ENCODE measurements at regions of chr15 and their contacts with region 1.

Region 1: GRCh38 chr15:41936649-41937567 is 35.4 kb downstream of the EHD4 start:
- DNase-seq: peak; percentile 61 to 95 (median 74)
- ATAC-seq: peak; percentile 81
- H3K4me3 ChIP-seq: peak overlapping the region; percentile 11
- H3K4me3 Mint-ChIP-seq: peak overlapping the region; percentile 83
- H3K27ac ChIP-seq: peak overlapping the region; percentile 97
- H3K27ac Mint-ChIP-seq: peak overlapping the region; percentile 89
- H3K4me1 ChIP-seq: peaks cover 68% of the 10 kb centered on the region
- H3K4me1 Mint-ChIP-seq: peaks cover 63% of the 10 kb centered on the region
- H3K27me3 ChIP-seq: no peaks in the 10 kb centered on the region
- H3K27me3 Mint-ChIP-seq: no peaks in the 10 kb centered on the region
- CTCF ChIP-seq: peak; percentile 42

Region 2: GRCh38 chr15:41660235-41661077 is 276.5 kb before region 1 on chr15 and contains the start of gene MGA:
- CTCF ChIA-PET with region 1: no interaction called
- POLR2A ChIA-PET with region 1: interaction called, 13 read pairs
- intact Hi-C with region 1: no loop called
- DNase-seq: peak; percentile 77 to 96 (median 89)
- ATAC-seq: peak; percentile 79
- H3K4me3 ChIP-seq: peak within 1 kb of the TSS; percentile 65
- H3K4me3 Mint-ChIP-seq: peak within 1 kb of the TSS; percentile 83
- H3K27ac ChIP-seq: peak within 1 kb of the TSS; percentile 81 to 91
- H3K27ac Mint-ChIP-seq: peak within 1 kb of the TSS; percentile 89
- H3K4me1 ChIP-seq: peaks cover 32% of the 10 kb centered on the region
- H3K4me1 Mint-ChIP-seq: peaks cover 66% of the 10 kb centered on the region
- H3K27me3 ChIP-seq: no peaks in the 10 kb centered on the region
- H3K27me3 Mint-ChIP-seq: no peaks in the 10 kb centered on the region
- CTCF ChIP-seq: no peak
- total RNA-seq, gene MGA: 31.0 to 33.9 TPM

Region 3: GRCh38 chr15:41827880-41828806 is 108.8 kb before region 1 on chr15 and contains the start of gene JMJD7:
- CTCF ChIA-PET with region 1: no interaction called
- POLR2A ChIA-PET with region 1: interaction called, 5 read pairs
- intact Hi-C with region 1: loop called in 1 of 2 experiments (anchors 2 kb)
- DNase-seq: peak; percentile 92 to 99 (median 96)
- ATAC-seq: peak; percentile 94
- H3K4me3 ChIP-seq: peak within 1 kb of the TSS; percentile 92
- H3K4me3 Mint-ChIP-seq: peak within 1 kb of the TSS; percentile 90
- H3K27ac ChIP-seq: peak within 1 kb of the TSS; percentile 53 to 64
- H3K27ac Mint-ChIP-seq: peak within 1 kb of the TSS; percentile 87
- H3K4me1 ChIP-seq: peaks cover 52% of the 10 kb centered on the region
- H3K4me1 Mint-ChIP-seq: peaks cover 30% of the 10 kb centered on the region
- H3K27me3 ChIP-seq: no peaks in the 10 kb centered on the region
- H3K27me3 Mint-ChIP-seq: no peaks in the 10 kb centered on the region
- CTCF ChIP-seq: no peak
- total RNA-seq, gene JMJD7: 35.6 to 38.4 TPM

Region 4: GRCh38 chr15:41904541-41905005 is 32.3 kb before region 1 on chr15:
- CTCF ChIA-PET with region 1: interaction called, 36 read pairs
- POLR2A ChIA-PET with region 1: interaction called, 17 read pairs
- intact Hi-C with region 1: loop called in 1 of 2 experiments (anchors 2 kb)
- DNase-seq: peak; percentile 63 to 85 (median 71)
- ATAC-seq: peak; percentile 88
- H3K4me3 ChIP-seq: no peak overlapping the region
- H3K4me3 Mint-ChIP-seq: no peak overlapping the region
- H3K27ac ChIP-seq: no peak overlapping the region
- H3K27ac Mint-ChIP-seq: peak overlapping the region; percentile 80
- H3K4me1 ChIP-seq: peaks cover 10% of the 10 kb centered on the region
- H3K4me1 Mint-ChIP-seq: peaks cover 7% of the 10 kb centered on the region
- H3K27me3 ChIP-seq: no peaks in the 10 kb centered on the region
- H3K27me3 Mint-ChIP-seq: no peaks in the 10 kb centered on the region
- CTCF ChIP-seq: peak; percentile 95

Region 5: DNA sequence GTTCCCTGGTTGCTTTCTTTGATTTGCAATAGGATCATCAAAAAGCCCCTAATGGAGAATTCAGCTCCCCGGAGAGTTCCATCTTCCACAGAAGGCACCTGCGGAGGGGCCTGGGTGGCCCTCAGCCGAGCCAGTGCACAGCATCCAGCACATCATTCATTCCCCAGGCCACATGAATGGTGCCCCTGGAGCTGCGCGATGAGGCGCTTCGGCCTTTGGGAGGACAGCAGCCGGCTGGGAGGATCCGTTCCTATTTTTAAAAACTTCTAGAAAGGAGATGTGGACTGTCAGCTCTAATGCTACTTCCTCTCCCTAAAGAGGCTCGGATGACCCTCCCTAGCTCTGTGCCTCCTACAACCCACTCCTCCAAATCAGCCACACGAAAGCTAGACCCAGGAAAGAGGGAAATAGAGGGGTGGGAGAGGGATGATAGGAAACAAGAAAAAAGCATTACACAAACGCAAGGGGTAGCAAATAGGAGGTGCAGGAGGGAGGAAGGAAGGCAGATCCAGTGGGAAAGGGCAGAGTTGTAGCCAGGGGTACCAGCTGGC is 15.2 kb after region 1 on chr15:
- CTCF ChIA-PET with region 1: no interaction called
- POLR2A ChIA-PET with region 1: interaction called, 13 read pairs
- intact Hi-C with region 1: no loop called
- DNase-seq: no peak
- ATAC-seq: no peak
- H3K4me3 ChIP-seq: no peak overlapping the region
- H3K4me3 Mint-ChIP-seq: no peak overlapping the region
- H3K27ac ChIP-seq: no peak overlapping the region
- H3K27ac Mint-ChIP-seq: no peak overlapping the region
- H3K4me1 ChIP-seq: peaks cover 2% of the 10 kb centered on the region
- H3K4me1 Mint-ChIP-seq: no peaks in the 10 kb centered on the region
- H3K27me3 ChIP-seq: no peaks in the 10 kb centered on the region
- H3K27me3 Mint-ChIP-seq: no peaks in the 10 kb centered on the region
- CTCF ChIP-seq: no peak

Region 6: GRCh38 chr15:42056934-42057779 is 120.2 kb after region 1 on chr15:
- CTCF ChIA-PET with region 1: no interaction called
- POLR2A ChIA-PET with region 1: no interaction called
- intact Hi-C with region 1: no loop called
- DNase-seq: peak in 13 of 14 experiments; percentile 15 to 82 (median 35)
- ATAC-seq: peak; percentile 81
- H3K4me3 ChIP-seq: peak overlapping the region; percentile 36
- H3K4me3 Mint-ChIP-seq: peak overlapping the region; percentile 61
- H3K27ac ChIP-seq: no peak overlapping the region
- H3K27ac Mint-ChIP-seq: peak overlapping the region; percentile 31
- H3K4me1 ChIP-seq: peaks cover 22% of the 10 kb centered on the region
- H3K4me1 Mint-ChIP-seq: peaks cover 14% of the 10 kb centered on the region
- H3K27me3 ChIP-seq: peaks cover 19 to 23% of the 10 kb centered on the region in 2 experiments
- H3K27me3 Mint-ChIP-seq: peaks cover 39% of the 10 kb centered on the region
- CTCF ChIP-seq: peak; percentile 31

Region 7: GRCh38 chr15:42273102-42273899 is 336.4 kb after region 1 on chr15 and contains the starts of genes GANC and TMEM87A:
- CTCF ChIA-PET with region 1: no interaction called
- POLR2A ChIA-PET with region 1: interaction called, 7 read pairs
- intact Hi-C with region 1: loop called in 1 of 2 experiments (anchors 5 kb)
- DNase-seq: peak; percentile 90 to 99 (median 94)
- ATAC-seq: peak; percentile 89
- H3K4me3 ChIP-seq: peak within 1 kb of the TSS; percentile 70
- H3K4me3 Mint-ChIP-seq: peak within 1 kb of the TSS; percentile 90
- H3K27ac ChIP-seq: peak within 1 kb of the TSS; percentile 92 to 95
- H3K27ac Mint-ChIP-seq: peak within 1 kb of the TSS; percentile 98
- H3K4me1 ChIP-seq: peaks cover 12% of the 10 kb centered on the region
- H3K4me1 Mint-ChIP-seq: peaks cover 76% of the 10 kb centered on the region
- H3K27me3 ChIP-seq: no peaks in the 10 kb centered on the region
- H3K27me3 Mint-ChIP-seq: no peaks in the 10 kb centered on the region
- CTCF ChIP-seq: no peak
- total RNA-seq, gene GANC: 22.3 to 23.9 TPM
- total RNA-seq, gene TMEM87A: 48.7 to 51.4 TPM

Measured in CD4-positive, alpha-beta T cell (primary cell).